ENCODE measurements at regions of chr5 and their contacts with region 1.

Region 1: DNA sequence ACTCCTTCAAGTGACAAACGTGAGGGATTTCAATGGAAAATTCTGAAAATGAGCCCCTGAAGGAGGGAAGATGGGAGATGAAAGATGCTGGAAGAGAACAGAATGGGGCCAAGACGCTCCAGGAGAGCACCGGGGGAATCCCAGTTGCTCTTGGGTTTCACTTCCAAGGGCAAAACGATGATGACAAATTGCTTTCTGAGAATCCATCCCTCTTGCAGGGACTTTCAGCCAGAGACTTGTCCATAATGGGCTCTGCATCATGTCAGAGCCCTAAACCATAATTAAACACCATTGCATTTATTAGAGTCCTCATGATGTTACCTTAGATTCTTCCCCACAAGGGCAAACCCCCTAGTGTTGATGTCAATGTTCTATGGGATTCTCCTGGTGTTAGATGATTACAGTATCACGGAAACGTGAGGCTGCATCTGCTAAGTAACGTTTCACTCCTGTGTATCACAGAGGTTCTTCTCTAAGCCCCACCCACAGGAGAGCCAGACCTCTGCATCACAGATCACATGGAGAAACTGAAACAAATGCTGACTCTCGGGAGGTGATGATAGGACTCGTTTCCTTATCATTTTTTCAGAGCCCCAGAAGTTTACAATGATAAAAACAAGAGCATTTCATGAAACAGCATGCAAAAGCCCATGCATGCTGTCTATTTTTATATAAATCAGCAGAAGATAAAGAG is 114.4 kb downstream of the TENT4A start:
- DNase-seq: peak; percentile 70
- ATAC-seq: peak; percentile 76
- H3K4me3 Mint-ChIP-seq: peak overlapping the region; percentile 60
- H3K27ac Mint-ChIP-seq: peak overlapping the region; percentile 86
- H3K4me1 Mint-ChIP-seq: peaks cover 49% of the 10 kb centered on the region
- H3K27me3 Mint-ChIP-seq: peaks cover 12% of the 10 kb centered on the region

Region 2: DNA sequence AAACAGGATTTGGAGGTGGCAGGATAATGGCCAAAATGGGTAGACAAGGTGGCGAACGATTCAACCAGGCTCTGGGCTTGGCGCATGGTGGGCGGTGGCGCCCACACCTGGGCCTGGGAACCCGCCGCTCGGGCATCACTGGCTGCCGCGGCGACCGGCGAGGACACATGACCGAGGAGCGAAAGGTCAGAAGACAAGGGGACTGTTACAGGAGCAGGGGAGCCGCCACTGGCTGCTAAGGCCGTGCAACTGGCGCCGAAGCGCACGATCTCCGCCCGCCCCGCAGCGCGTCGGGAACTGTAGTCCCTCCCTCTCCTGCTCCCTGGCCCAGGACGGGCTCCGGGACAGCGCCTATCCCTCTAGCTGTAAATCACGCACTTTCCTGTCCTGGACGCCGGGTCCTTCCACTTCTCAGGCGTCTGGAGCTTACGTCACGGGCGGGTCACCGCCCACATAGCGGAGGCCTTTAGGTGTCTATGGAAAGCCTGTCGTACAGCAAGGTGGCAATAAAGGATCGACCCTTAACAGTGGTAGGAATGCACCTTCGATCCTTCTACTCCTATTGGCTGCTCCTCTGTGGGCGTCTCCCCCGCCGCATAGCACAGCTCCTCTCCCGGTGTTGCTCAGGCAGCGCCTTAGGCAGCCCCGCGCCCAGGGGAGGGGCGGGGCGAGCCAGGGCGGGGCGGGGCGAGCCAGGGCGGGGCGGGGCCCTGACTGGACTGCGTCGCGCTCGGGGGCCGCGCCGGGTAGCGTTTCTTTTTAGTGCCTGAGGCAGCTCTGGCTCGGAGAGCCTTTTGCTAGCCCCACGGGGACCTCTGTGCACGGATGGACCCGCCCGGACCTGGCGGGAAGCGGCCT is 1405.5 kb before region 1 on chr5 and contains the start of gene ICE1:
- CTCF ChIA-PET with region 1: no interaction called
- POLR2A ChIA-PET with region 1: no interaction called
- intact Hi-C with region 1: loop called in 1 of 2 experiments (anchors 2 kb)
- DNase-seq: peak; percentile 95
- ATAC-seq: peak; percentile 91
- H3K4me3 Mint-ChIP-seq: peak within 1 kb of the TSS; percentile 90
- H3K27ac Mint-ChIP-seq: peak within 1 kb of the TSS; percentile 91
- H3K4me1 Mint-ChIP-seq: peaks cover 12% of the 10 kb centered on the region
- H3K27me3 Mint-ChIP-seq: no peaks in the 10 kb centered on the region
- total RNA-seq, gene ICE1: 26.5 to 27.4 TPM

Region 3: DNA sequence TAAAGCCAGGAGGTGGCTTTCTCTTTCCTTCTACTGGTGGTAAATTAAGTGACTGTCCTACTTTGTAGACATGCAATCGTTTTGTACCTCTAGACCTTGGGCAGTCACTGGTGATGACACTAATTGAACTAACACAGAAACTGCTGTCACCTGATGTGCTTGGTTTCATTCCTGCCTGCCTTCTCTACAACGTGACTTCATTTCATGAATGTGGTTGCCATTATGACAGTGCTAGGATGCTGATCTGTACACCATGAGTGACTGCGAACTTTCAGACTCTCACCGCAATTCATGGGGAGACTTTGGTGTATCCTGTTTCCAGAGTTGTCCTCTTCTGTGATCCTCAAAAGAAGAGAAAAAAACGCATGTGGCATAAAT is 331.5 kb before region 1 on chr5:
- CTCF ChIA-PET with region 1: no interaction called
- POLR2A ChIA-PET with region 1: no interaction called
- intact Hi-C with region 1: loop called in 1 of 2 experiments (anchors 2 kb)
- DNase-seq: peak; percentile 51
- ATAC-seq: peak; percentile 90
- H3K4me3 Mint-ChIP-seq: no peak overlapping the region
- H3K27ac Mint-ChIP-seq: no peak overlapping the region
- H3K4me1 Mint-ChIP-seq: peaks cover 21% of the 10 kb centered on the region
- H3K27me3 Mint-ChIP-seq: peaks cover 12% of the 10 kb centered on the region

Region 4: GRCh38 chr5:6568383-6568782 is 259.3 kb before region 1 on chr5:
- CTCF ChIA-PET with region 1: no interaction called
- POLR2A ChIA-PET with region 1: no interaction called
- intact Hi-C with region 1: no loop called
- DNase-seq: no peak
- ATAC-seq: no peak
- H3K4me3 Mint-ChIP-seq: no peak overlapping the region
- H3K27ac Mint-ChIP-seq: no peak overlapping the region
- H3K4me1 Mint-ChIP-seq: no peaks in the 10 kb centered on the region
- H3K27me3 Mint-ChIP-seq: peaks cover 23% of the 10 kb centered on the region

Region 5: GRCh38 chr5:6583049-6583880 is 244.4 kb before region 1 on chr5:
- CTCF ChIA-PET with region 1: no interaction called
- POLR2A ChIA-PET with region 1: no interaction called
- intact Hi-C with region 1: no loop called
- DNase-seq: peak; percentile 41
- ATAC-seq: peak; percentile 82
- H3K4me3 Mint-ChIP-seq: no peak overlapping the region
- H3K27ac Mint-ChIP-seq: no peak overlapping the region
- H3K4me1 Mint-ChIP-seq: peaks cover 3% of the 10 kb centered on the region
- H3K27me3 Mint-ChIP-seq: peaks cover 50% of the 10 kb centered on the region

Region 6: GRCh38 chr5:6712577-6713275 is 114.9 kb before region 1 on chr5:
- CTCF ChIA-PET with region 1: no interaction called
- POLR2A ChIA-PET with region 1: no interaction called
- intact Hi-C with region 1: loop called in 1 of 2 experiments (anchors 1 kb)
- DNase-seq: peak; percentile 98
- ATAC-seq: peak; percentile 84
- H3K4me3 Mint-ChIP-seq: peak overlapping the region; percentile 78
- H3K27ac Mint-ChIP-seq: peak overlapping the region; percentile 95
- H3K4me1 Mint-ChIP-seq: peaks cover 30% of the 10 kb centered on the region
- H3K27me3 Mint-ChIP-seq: no peaks in the 10 kb centered on the region

Region 7: GRCh38 chr5:6849316-6850105 is 21.8 kb after region 1 on chr5:
- CTCF ChIA-PET with region 1: interaction called, 3 read pairs
- POLR2A ChIA-PET with region 1: no interaction called
- intact Hi-C with region 1: loop called (anchors 1 kb)
- DNase-seq: peak; percentile 62
- ATAC-seq: peak; percentile 99
- H3K4me3 Mint-ChIP-seq: no peak overlapping the region
- H3K27ac Mint-ChIP-seq: no peak overlapping the region
- H3K4me1 Mint-ChIP-seq: peaks cover 12% of the 10 kb centered on the region
- H3K27me3 Mint-ChIP-seq: peaks cover 1% of the 10 kb centered on the region

Region 8: GRCh38 chr5:7190712-7191250 is 363.1 kb after region 1 on chr5:
- CTCF ChIA-PET with region 1: no interaction called
- POLR2A ChIA-PET with region 1: no interaction called
- intact Hi-C with region 1: no loop called
- DNase-seq: no peak
- ATAC-seq: no peak
- H3K4me3 Mint-ChIP-seq: no peak overlapping the region
- H3K27ac Mint-ChIP-seq: no peak overlapping the region
- H3K4me1 Mint-ChIP-seq: no peaks in the 10 kb centered on the region
- H3K27me3 Mint-ChIP-seq: peaks cover 4% of the 10 kb centered on the region

Region 9: GRCh38 chr5:7868773-7869473 is 1041.2 kb after region 1 on chr5 and contains the starts of genes FASTKD3 and MTRR:
- CTCF ChIA-PET with region 1: no interaction called
- POLR2A ChIA-PET with region 1: no interaction called
- intact Hi-C with region 1: loop called in 1 of 2 experiments (anchors 2 kb)
- DNase-seq: peak; percentile 93
- ATAC-seq: peak; percentile 99
- H3K4me3 Mint-ChIP-seq: peak within 1 kb of the TSS; percentile 94
- H3K27ac Mint-ChIP-seq: peak within 1 kb of the TSS; percentile 95
- H3K4me1 Mint-ChIP-seq: peaks cover 68% of the 10 kb centered on the region
- H3K27me3 Mint-ChIP-seq: no peaks in the 10 kb centered on the region
- total RNA-seq, gene FASTKD3: 9.2 to 9.6 TPM
- total RNA-seq, gene MTRR: 49.3 to 52.9 TPM

Measured in activated CD4-positive, alpha-beta T cell treated with anti-CD3 and anti-CD28 coated beads for 36 hours (primary cell).